GM12878 (cell line): ENCODE measurements at regions of chr3 and their contacts with region 1.

Region 1: GRCh38 chr3:177300039-177300833 is 103.0 kb upstream of the TBL1XR1 start:
- DNase-seq: peak; percentile 40
- ATAC-seq: peak; percentile 54
- H3K4me3 ChIP-seq: no peak overlapping the region
- H3K27ac ChIP-seq: no peak overlapping the region
- H3K4me1 ChIP-seq: peaks cover 11% of the 10 kb centered on the region; the same call in 1 of the 2 replicates
- H3K27me3 ChIP-seq: no peaks in the 10 kb centered on the region
- CTCF ChIP-seq: no peak
- EP300 ChIP-seq: no peak
- POLR2A ChIP-seq: no peak
- RAD21 ChIP-seq: no peak

Region 2: GRCh38 chr3:176953106-176954060 is 346.9 kb before region 1 on chr3:
- CTCF ChIA-PET with region 1: no interaction called
- POLR2A ChIA-PET with region 1: interaction called, 10 read pairs
- RAD21 ChIA-PET with region 1: no interaction called
- SMC1A ChIA-PET with region 1: no interaction called
- in situ Hi-C with region 1: no loop called
- intact Hi-C with region 1: no loop called
- DNase-seq: no peak
- ATAC-seq: no peak
- H3K4me3 ChIP-seq: no peak overlapping the region
- H3K27ac ChIP-seq: no peak overlapping the region
- H3K4me1 ChIP-seq: no peaks in the 10 kb centered on the region
- H3K27me3 ChIP-seq: no peaks in the 10 kb centered on the region; a peak in 3 of 4 replicates
- CTCF ChIP-seq: no peak
- EP300 ChIP-seq: no peak
- POLR2A ChIP-seq: no peak
- RAD21 ChIP-seq: no peak

Region 3: DNA sequence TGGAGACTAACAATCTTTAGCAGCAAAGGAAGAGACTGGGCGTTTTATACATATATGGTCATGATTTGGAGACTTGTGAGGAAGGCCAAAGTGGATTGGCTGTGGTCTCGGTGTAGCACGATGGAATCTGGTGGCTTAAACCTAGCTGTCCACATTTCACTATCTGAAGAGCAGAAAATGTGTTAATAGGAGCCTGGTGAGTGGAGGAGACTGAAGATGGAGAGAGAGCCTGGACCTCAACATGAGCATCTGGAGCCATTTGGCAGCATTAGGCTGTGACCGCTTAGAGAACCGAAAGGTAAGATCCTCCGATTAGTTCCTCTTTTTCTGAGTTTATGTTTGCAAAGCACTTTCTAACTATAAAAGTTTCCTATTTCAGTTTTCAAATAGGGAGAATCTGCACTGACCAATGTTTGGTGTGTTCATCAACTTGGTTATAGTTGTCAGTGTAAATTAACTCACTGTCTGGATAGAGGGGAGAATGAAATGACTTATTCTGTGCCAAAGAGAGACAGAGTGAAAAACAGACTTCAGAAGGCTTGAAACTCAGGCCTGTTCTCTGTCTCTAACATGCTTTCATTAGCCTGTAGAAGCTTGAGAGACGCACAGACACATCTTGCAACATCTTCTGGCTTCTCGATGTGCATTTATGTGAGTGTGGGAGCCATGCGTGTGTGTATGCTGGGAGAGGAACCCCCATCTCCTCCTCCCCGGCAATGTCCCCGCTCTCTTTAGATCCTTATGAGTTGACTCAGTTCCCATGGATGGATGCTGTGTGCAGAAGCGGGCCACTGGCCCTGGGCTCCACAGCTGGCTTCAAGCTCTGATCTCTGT is 141.8 kb after region 1 on chr3:
- CTCF ChIA-PET with region 1: no interaction called
- POLR2A ChIA-PET with region 1: no interaction called
- RAD21 ChIA-PET with region 1: no interaction called
- SMC1A ChIA-PET with region 1: no interaction called
- in situ Hi-C with region 1: no loop called
- intact Hi-C with region 1: no loop called
- DNase-seq: peak; percentile 77
- ATAC-seq: peak; percentile 98
- H3K4me3 ChIP-seq: 0 out of 2 replicates have a peak overlapping the region, but pooled peaks have one; percentile 4
- H3K27ac ChIP-seq: peak overlapping the region; percentile 55
- H3K4me1 ChIP-seq: peaks cover 18% of the 10 kb centered on the region
- H3K27me3 ChIP-seq: no peaks in the 10 kb centered on the region
- CTCF ChIP-seq: no peak
- EP300 ChIP-seq: peak; percentile 47 to 59; a peak in 3 of 4 replicates
- POLR2A ChIP-seq: no peak
- RAD21 ChIP-seq: no peak

Region 4: GRCh38 chr3:177574251-177574743 is 274.1 kb after region 1 on chr3:
- CTCF ChIA-PET with region 1: no interaction called
- POLR2A ChIA-PET with region 1: no interaction called
- RAD21 ChIA-PET with region 1: no interaction called
- SMC1A ChIA-PET with region 1: no interaction called
- in situ Hi-C with region 1: no loop called
- intact Hi-C with region 1: no loop called
- DNase-seq: no peak
- ATAC-seq: no peak
- H3K4me3 ChIP-seq: no peak overlapping the region
- H3K27ac ChIP-seq: no peak overlapping the region
- H3K4me1 ChIP-seq: no peaks in the 10 kb centered on the region
- H3K27me3 ChIP-seq: no peaks in the 10 kb centered on the region
- CTCF ChIP-seq: no peak
- EP300 ChIP-seq: no peak
- POLR2A ChIP-seq: no peak
- RAD21 ChIP-seq: no peak